HCT116 (cell line): ENCODE measurements at regions of chr7 and their contacts with region 1.

Region 1: DNA sequence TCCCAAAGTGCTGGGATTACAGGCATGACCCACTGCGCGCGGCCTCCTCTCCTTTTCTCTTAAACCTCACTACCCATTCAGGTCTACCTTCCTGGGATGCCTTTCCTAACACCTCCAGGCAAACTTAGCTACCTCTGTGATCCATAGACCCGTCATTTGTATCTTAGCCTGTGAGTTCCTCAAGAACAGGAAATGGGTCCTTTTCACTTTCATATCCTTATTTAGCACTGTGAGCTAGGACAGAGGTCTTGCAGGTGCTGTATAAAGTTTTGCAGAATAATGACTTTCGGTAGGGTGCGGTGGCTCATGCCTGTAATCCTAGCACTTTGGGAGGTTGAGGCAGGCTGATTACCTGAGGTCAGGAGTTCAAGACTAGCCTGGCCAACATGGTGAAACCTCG is 215.7 kb downstream of the RELN start:
- DNase-seq: no peak
- ATAC-seq: no peak
- H3K4me3 ChIP-seq: no peak overlapping the region
- H3K27ac ChIP-seq: no peak overlapping the region
- H3K4me1 ChIP-seq: no peaks in the 10 kb centered on the region
- H3K27me3 ChIP-seq: peaks cover 32% of the 10 kb centered on the region
- CTCF ChIP-seq: no peak
- POLR2A ChIP-seq: no peak
- RAD21 ChIP-seq: no peak

Region 2: GRCh38 chr7:103990991-103991390 is 217.3 kb after region 1 on chr7:
- CTCF ChIA-PET with region 1: no interaction called
- POLR2A ChIA-PET with region 1: no interaction called
- RAD21 ChIA-PET with region 1: interaction called in 1 of 2 experiments, 11 read pairs
- intact Hi-C with region 1: no loop called
- DNase-seq: no peak
- ATAC-seq: no peak
- H3K4me3 ChIP-seq: no peak overlapping the region
- H3K27ac ChIP-seq: no peak overlapping the region
- H3K4me1 ChIP-seq: no peaks in the 10 kb centered on the region
- H3K27me3 ChIP-seq: peaks cover 21% of the 10 kb centered on the region
- CTCF ChIP-seq: no peak
- POLR2A ChIP-seq: no peak
- RAD21 ChIP-seq: no peak